ENCODE measurements at regions of chr2 and their contacts with region 1.

Region 1: DNA sequence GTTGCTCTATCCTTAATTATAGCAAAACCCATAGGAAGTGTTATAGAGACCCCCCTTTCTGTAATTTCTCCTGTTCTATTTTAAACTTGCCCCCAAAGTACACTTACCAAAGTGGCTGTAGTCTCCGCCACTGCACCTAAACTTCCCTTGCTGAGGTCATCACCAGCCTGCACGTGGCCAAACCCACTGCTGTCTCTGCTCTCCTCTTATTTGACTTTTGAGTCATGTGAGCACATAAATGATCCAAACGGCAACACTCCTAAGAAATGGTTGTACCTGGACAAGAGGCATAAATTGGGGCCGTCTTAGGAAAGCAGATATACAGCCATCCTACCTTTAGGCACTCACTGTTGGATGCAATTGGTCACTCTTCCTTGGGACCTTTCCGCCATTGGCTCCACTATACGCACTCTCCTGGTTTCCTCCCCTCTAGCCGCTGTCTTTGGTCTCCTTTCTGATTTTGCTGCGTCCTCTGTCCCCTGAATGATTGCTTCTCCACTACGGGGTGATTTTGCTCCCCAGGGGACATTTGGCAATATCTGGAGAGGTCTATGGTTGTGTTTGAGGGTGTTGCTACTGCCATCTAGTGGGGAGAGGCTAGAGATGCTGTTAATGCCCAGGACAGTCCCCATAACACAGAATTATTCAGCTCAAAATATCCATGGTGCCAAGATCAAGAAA is 19.2 kb upstream of the IL36G start:
- DNase-seq: peak; percentile 59
- CTCF ChIP-seq: peak; percentile 79

Region 2: GRCh38 chr2:112848833-112849232 is 109.7 kb before region 1 on chr2:
- CTCF ChIA-PET with region 1: no interaction called
- POLR2A ChIA-PET with region 1: no interaction called
- DNase-seq: no peak
- CTCF ChIP-seq: no peak

Region 3: GRCh38 chr2:112947374-112947773 is 11.2 kb before region 1 on chr2:
- CTCF ChIA-PET with region 1: interaction called, 40 read pairs
- POLR2A ChIA-PET with region 1: no interaction called
- DNase-seq: no peak
- CTCF ChIP-seq: no peak